Uterus (tissue), 4 donors: ENCODE measurements at regions of chr1 and their contacts with region 1.

Region 1: DNA sequence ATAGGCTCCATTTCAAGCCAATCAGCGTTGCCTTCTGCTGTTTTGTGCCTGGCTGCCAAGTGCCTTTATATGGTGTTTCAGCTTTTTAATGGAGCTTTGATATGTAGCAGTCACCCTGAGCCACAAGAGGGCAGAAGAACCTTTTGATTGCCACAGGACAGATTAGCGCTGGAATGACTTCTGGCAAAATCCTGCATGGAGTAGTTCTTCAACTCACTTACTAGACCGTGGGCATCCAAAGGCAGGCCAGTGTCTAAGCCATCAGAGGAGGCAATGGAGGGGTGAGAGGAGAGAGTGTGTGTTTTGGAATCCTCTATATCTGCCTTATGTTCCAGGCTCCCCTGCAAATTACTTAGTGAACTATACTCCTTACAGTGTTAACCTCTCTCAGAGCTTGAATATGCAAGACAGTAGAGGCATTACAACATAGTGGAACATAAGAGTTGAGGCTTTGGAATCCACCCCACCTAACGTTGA is 56.2 kb downstream of the ST3GAL3 start:
- DNase-seq: peak; percentile 72 to 86
- H3K4me3 ChIP-seq: no peak overlapping the region
- H3K27ac ChIP-seq: peak overlapping the region; percentile 7 to 9
- H3K4me1 ChIP-seq: no peaks in the 10 kb centered on the region
- H3K27me3 ChIP-seq: no peaks in the 10 kb centered on the region
- CTCF ChIP-seq: peak; percentile 77 to 98 (median 92)
- POLR2A ChIP-seq: no peak

Region 2: GRCh38 chr1:43473463-43473862 is 290.1 kb before region 1 on chr1:
- intact Hi-C with region 1: no loop called
- DNase-seq: no peak
- H3K4me3 ChIP-seq: no peak overlapping the region
- H3K27ac ChIP-seq: no peak overlapping the region
- H3K4me1 ChIP-seq: no peaks in the 10 kb centered on the region
- H3K27me3 ChIP-seq: no peaks in the 10 kb centered on the region
- CTCF ChIP-seq: no peak
- POLR2A ChIP-seq: no peak

Region 3: GRCh38 chr1:43936431-43937151 is 173.1 kb after region 1 on chr1:
- intact Hi-C with region 1: loop called (anchors 5 kb)
- DNase-seq: peak in 1 of 2 donors; percentile 35
- H3K4me3 ChIP-seq: peak overlapping the region in 1 of 2 donors; percentile 34
- H3K27ac ChIP-seq: no peak overlapping the region
- H3K4me1 ChIP-seq: peaks cover 0 to 11% of the 10 kb centered on the region in 2 donors
- H3K27me3 ChIP-seq: no peaks in the 10 kb centered on the region
- CTCF ChIP-seq: no peak
- POLR2A ChIP-seq: no peak